ENCODE measurements at regions of chr9 and their contacts with region 1.

Region 1: DNA sequence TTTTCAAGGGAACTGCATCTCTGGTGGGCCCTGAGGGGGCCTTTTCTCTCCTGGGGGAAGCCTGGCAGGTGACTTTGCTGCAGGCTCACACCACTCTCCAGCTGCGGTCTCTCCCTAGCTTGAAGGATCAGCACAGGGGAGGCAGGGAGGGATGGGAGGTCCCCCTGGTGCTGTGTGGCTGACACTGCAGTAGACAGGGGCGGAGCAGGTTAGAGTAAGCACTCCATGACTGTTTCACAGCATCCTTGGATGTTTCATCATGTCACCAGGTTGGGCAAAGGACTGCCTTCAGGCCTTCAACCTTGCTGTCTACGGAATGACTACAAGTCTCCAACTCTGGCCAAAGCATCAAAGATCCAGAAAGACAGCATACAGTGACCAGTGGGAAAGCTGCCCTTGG is 470.7 kb downstream of the CDK5RAP2 start:
- DNase-seq: peak; percentile 50 to 69
- H3K4me3 ChIP-seq: no peak overlapping the region
- H3K27ac ChIP-seq: no peak overlapping the region
- H3K4me1 ChIP-seq: no peaks in the 10 kb centered on the region
- H3K27me3 ChIP-seq: no peaks in the 10 kb centered on the region
- CTCF ChIP-seq: peak; percentile 79 to 96 (median 88)
- EP300 ChIP-seq: no peak
- POLR2A ChIP-seq: no peak
- RAD21 ChIP-seq: peak; percentile 92 to 95

Region 2: GRCh38 chr9:119968836-119969707 is 140.2 kb before region 1 on chr9:
- CTCF ChIA-PET with region 1: interaction called, 11 read pairs
- POLR2A ChIA-PET with region 1: no interaction called
- DNase-seq: peak; percentile 56 to 85
- H3K4me3 ChIP-seq: no peak overlapping the region
- H3K27ac ChIP-seq: no peak overlapping the region
- H3K4me1 ChIP-seq: peaks cover 0 to 5% (median 4%) of the 10 kb centered on the region in 4 experiments; a peak in 3 of 7 replicates
- H3K27me3 ChIP-seq: no peaks in the 10 kb centered on the region
- CTCF ChIP-seq: peak; percentile 87 to 90 (median 89)
- EP300 ChIP-seq: no peak
- POLR2A ChIP-seq: no peak
- RAD21 ChIP-seq: peak; percentile 79 to 90

Region 3: DNA sequence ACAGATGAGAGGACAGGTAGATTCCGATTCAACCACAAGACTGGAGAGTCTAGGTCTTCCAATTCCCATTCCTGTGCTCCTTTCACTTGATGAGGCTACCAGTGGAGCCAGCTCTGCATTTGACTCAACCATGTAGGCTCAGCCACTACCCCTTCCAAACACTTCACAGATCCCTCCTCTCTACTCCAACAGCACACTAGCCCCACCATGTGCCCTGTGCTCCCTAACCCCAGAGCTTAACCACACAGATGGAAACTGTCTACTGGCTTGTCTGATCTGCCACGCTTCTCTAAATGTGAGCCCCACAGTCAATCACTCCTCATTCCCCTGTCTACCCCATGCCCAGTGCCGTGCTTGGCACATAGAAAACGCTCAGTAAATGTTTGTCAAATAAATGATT is 37.5 kb before region 1 on chr9:
- CTCF ChIA-PET with region 1: interaction called, 13 read pairs
- POLR2A ChIA-PET with region 1: no interaction called
- DNase-seq: no peak
- H3K4me3 ChIP-seq: no peak overlapping the region
- H3K27ac ChIP-seq: no peak overlapping the region
- H3K4me1 ChIP-seq: no peaks in the 10 kb centered on the region
- H3K27me3 ChIP-seq: no peaks in the 10 kb centered on the region; a peak in 1 of 7 replicates
- CTCF ChIP-seq: peak; percentile 16 to 38 (median 34); a peak in 3 of 4 replicates
- EP300 ChIP-seq: no peak
- POLR2A ChIP-seq: no peak
- RAD21 ChIP-seq: peak; percentile 63 to 70

Region 4: DNA sequence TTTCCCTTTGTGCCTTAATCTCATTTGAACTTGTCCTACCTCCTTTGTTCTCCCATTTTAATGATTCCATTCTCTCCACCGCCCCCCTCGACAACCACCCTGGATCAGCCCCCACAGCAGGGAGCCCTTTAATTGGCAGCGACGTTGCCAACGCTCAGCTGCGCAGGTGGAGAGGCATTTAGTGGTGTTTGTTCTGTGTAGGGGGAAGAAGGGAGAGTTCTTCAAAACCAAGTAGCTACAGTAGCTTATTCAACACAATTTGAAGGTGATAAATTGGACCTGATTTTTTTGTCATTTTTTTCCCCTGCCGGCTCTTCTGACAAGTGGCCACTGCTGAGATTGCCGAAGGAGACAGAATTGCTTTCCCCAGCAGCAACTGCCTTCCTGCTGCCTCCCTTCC is 28.4 kb before region 1 on chr9:
- CTCF ChIA-PET with region 1: interaction called, 11 read pairs
- POLR2A ChIA-PET with region 1: no interaction called
- DNase-seq: no peak
- H3K4me3 ChIP-seq: no peak overlapping the region
- H3K27ac ChIP-seq: no peak overlapping the region
- H3K4me1 ChIP-seq: peaks cover 0 to 22% (median 6%) of the 10 kb centered on the region in 4 experiments; a peak in 5 of 7 replicates
- H3K27me3 ChIP-seq: no peaks in the 10 kb centered on the region; a peak in 2 of 7 replicates
- CTCF ChIP-seq: no peak
- EP300 ChIP-seq: no peak
- POLR2A ChIP-seq: no peak
- RAD21 ChIP-seq: no peak

Region 5: DNA sequence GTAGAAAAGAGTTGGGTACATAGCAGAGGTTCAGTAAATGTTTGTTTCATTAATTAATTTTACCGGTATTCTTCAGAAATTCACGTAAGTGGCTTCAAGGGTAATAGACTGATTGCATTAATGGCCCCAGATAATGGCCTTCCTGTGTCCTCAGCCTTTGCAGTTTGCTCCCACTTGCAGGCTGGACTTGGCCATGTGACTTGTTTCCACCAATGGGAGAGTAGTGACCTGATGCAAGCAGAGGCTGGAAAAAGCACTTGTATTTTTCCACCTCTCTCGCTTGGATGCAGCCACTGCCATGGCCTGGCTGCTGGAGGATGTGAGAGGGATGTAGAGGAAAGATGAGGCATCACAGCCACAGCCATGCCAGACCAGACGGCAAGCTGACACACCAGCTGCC is 10.2 kb before region 1 on chr9:
- CTCF ChIA-PET with region 1: interaction called, 12 read pairs
- POLR2A ChIA-PET with region 1: no interaction called
- DNase-seq: no peak
- H3K4me3 ChIP-seq: no peak overlapping the region
- H3K27ac ChIP-seq: no peak overlapping the region
- H3K4me1 ChIP-seq: peaks cover 0 to 13% (median 7%) of the 10 kb centered on the region in 4 experiments; a peak in 4 of 7 replicates
- H3K27me3 ChIP-seq: no peaks in the 10 kb centered on the region
- CTCF ChIP-seq: no peak
- EP300 ChIP-seq: no peak
- POLR2A ChIP-seq: no peak
- RAD21 ChIP-seq: no peak